SK-N-SH (cell line): ENCODE measurements at regions of chr11 and their contacts with region 1.

Region 1: GRCh38 chr11:72430741-72431570 is 3.4 kb downstream of the CLPB start:
- DNase-seq: peak; percentile 74
- H3K4me3 ChIP-seq: peak overlapping the region in 1 of 2 experiments; percentile 36; a peak in 1 of 4 replicates
- H3K27ac ChIP-seq: peak overlapping the region in 1 of 2 experiments; percentile 67; a peak in 2 of 4 replicates
- H3K4me1 ChIP-seq: peaks cover 9 to 44% of the 10 kb centered on the region in 2 experiments; a peak in 2 of 4 replicates
- H3K27me3 ChIP-seq: no peaks in the 10 kb centered on the region
- CTCF ChIP-seq: peak; percentile 91
- EP300 ChIP-seq: no peak
- RAD21 ChIP-seq: peak; percentile 98

Region 2: DNA sequence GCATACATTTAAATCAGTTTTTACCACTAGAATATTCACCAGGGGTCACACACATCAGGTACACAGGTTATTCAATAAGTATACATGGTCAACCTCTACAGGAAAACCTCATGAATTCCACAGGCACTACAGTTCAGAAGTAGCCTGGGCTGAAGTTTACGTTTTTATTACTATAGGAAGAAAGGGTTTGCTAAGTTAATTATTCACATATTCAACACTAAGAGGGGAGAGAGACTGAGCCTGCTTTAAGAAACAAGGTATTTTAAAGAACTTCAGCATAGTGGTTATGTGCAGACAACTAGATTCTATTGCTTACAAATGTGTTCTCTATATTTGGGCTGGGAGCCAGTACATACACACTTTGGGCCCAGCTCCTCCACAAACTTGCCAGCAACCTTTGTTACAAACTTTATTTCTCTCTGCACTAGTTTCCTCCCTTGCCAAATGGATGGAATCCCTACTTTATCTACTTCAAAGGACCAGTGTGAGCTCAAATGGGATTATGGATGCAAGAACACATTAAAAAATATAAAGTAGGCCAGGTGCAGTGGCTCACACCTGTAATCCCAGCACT is 400.4 kb before region 1 on chr11:
- CTCF ChIA-PET with region 1: interaction called, 17 read pairs
- POLR2A ChIA-PET with region 1: no interaction called
- DNase-seq: no peak
- H3K4me3 ChIP-seq: no peak overlapping the region
- H3K27ac ChIP-seq: no peak overlapping the region
- H3K4me1 ChIP-seq: peaks cover 2 to 8% of the 10 kb centered on the region in 2 experiments; a peak in 3 of 4 replicates
- H3K27me3 ChIP-seq: no peaks in the 10 kb centered on the region
- CTCF ChIP-seq: no peak
- EP300 ChIP-seq: no peak
- RAD21 ChIP-seq: no peak

Region 3: GRCh38 chr11:72141066-72141465 is 289.9 kb before region 1 on chr11:
- CTCF ChIA-PET with region 1: interaction called, 33 read pairs
- POLR2A ChIA-PET with region 1: no interaction called
- DNase-seq: no peak
- H3K4me3 ChIP-seq: no peak overlapping the region
- H3K27ac ChIP-seq: peak overlapping the region in 1 of 2 experiments; percentile 37; a peak in 1 of 4 replicates
- H3K4me1 ChIP-seq: no peaks in the 10 kb centered on the region; a peak in 1 of 4 replicates
- H3K27me3 ChIP-seq: no peaks in the 10 kb centered on the region
- CTCF ChIP-seq: no peak
- EP300 ChIP-seq: no peak
- RAD21 ChIP-seq: no peak

Region 4: GRCh38 chr11:72293910-72294615 is 136.9 kb before region 1 on chr11:
- CTCF ChIA-PET with region 1: interaction called, 10 read pairs
- POLR2A ChIA-PET with region 1: no interaction called
- DNase-seq: no peak
- H3K4me3 ChIP-seq: no peak overlapping the region
- H3K27ac ChIP-seq: no peak overlapping the region; a peak in 1 of 4 replicates
- H3K4me1 ChIP-seq: peaks cover 0 to 13% of the 10 kb centered on the region in 2 experiments; a peak in 1 of 4 replicates
- H3K27me3 ChIP-seq: no peaks in the 10 kb centered on the region
- CTCF ChIP-seq: no peak
- EP300 ChIP-seq: no peak
- RAD21 ChIP-seq: no peak

Region 5: GRCh38 chr11:72352859-72353551 is 78.0 kb before region 1 on chr11:
- CTCF ChIA-PET with region 1: interaction called, 321 read pairs
- POLR2A ChIA-PET with region 1: interaction called, 13 read pairs
- DNase-seq: peak; percentile 51
- H3K4me3 ChIP-seq: no peak overlapping the region
- H3K27ac ChIP-seq: peak overlapping the region; percentile 71 to 100
- H3K4me1 ChIP-seq: peaks cover 41 to 92% of the 10 kb centered on the region in 2 experiments
- H3K27me3 ChIP-seq: no peaks in the 10 kb centered on the region
- CTCF ChIP-seq: peak; percentile 77
- EP300 ChIP-seq: peak in 1 of 2 experiments; percentile 86; a peak in 2 of 4 replicates
- RAD21 ChIP-seq: peak; percentile 97

Region 6: DNA sequence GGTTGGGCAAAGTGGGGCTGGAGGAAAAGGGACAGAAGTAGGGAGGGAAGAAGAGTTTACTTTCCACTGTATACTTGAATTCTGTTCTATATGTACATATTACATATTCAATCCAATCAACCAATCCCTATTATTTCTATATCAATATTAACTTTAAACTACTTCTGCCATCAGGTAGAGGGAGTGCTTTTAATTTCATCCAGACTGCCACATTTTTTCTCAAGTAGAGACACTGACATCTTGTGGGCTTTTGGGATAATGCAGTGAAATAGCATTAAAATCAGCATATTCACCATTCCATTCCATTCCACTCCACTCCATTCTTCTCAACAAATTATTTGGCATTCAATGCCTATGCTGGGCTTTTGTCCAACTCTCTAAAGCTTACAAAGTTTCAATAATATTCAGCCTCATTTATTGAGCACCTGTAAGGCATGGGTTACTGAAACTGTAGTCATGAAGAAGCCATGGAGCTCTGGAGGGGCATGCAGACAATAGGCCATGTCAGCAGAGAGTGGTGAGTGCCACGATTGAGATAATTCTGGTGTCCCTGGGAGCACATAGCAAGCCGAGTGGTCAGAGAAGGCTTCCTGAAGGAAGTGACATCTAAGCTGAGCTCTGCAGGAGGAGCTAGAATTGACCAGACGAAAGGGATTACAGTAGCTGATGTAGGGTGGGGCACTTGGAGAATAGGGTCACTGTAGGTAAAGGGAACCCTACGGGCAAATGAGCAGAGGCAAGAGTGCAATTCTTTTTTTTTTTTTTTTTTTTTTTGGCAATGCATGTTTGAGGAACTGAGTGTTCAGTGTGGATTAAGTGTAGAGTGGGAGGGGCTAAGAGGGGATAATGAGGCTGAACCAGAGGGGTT is 16.2 kb after region 1 on chr11:
- CTCF ChIA-PET with region 1: interaction called, 86 read pairs
- POLR2A ChIA-PET with region 1: no interaction called
- DNase-seq: peak; percentile 72
- H3K4me3 ChIP-seq: no peak overlapping the region; a peak in 1 of 4 replicates
- H3K27ac ChIP-seq: no peak overlapping the region
- H3K4me1 ChIP-seq: no peaks in the 10 kb centered on the region; a peak in 1 of 4 replicates
- H3K27me3 ChIP-seq: no peaks in the 10 kb centered on the region; the same call in 1 of the 2 replicates
- CTCF ChIP-seq: peak; percentile 87
- EP300 ChIP-seq: no peak
- RAD21 ChIP-seq: peak; percentile 88